Vagina (tissue), 2 donors: ENCODE measurements at regions of chr17 and their contacts with region 1.

Region 1: DNA sequence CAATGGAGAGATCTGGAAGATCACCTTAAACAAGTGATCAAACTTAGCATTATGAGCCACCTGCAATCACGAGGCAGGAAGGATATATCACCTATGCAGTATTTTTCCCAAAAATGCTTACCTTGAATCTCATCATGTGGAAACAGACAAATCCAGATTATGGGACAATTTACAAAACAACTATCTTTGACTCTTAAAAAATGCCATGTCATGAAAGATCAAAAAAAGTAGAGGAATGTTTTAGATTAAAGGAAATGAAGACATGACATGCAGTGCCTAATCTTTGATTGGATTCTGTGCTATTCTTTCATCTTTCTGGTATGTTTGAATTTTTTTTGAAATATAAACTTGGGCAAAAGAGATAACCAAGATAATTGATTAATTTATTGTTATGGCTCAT is 95.9 kb downstream of the KPNA2 start:
- DNase-seq: no peak
- H3K4me3 ChIP-seq: no peak overlapping the region
- H3K27ac ChIP-seq: no peak overlapping the region
- H3K4me1 ChIP-seq: no peaks in the 10 kb centered on the region
- H3K27me3 ChIP-seq: no peaks in the 10 kb centered on the region
- CTCF ChIP-seq: no peak
- POLR2A ChIP-seq: no peak

Region 2: GRCh38 chr17:68145088-68145487 is 13.6 kb after region 1 on chr17:
- intact Hi-C with region 1: loop called (anchors 2 kb)
- DNase-seq: no peak
- H3K4me3 ChIP-seq: no peak overlapping the region
- H3K27ac ChIP-seq: no peak overlapping the region
- H3K4me1 ChIP-seq: no peaks in the 10 kb centered on the region
- H3K27me3 ChIP-seq: no peaks in the 10 kb centered on the region
- CTCF ChIP-seq: no peak
- POLR2A ChIP-seq: no peak